ENCODE measurements at regions of chr3 and their contacts with region 1.

Region 1: DNA sequence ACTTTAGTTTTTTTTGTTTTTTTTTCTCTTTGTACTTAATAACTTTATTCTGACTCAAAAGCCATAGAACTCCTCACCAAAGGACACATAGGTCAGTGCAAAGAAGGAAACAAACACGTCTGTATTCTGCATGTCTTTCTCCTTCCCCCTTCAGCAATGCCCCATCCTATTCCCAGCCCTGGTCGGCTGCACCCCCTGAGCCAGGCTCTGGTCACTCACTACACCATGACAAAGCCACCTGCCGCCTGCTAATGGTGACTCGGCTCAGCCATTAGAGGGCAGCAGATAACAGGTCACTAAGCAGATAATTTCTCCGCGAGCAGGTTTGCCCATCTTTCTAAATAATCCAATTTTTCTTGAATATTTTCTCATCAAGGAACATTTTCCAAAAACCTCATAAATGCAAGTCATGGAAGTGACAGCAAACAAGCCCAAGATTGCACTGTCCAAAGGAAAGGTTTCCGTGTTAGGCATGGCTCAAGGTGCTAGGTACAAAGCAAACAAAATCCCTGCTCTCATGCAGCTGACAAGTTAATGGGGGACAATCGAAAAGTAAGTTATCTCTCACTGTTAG is 37.8 kb downstream of the TM4SF4 start:
- DNase-seq: peak in 1 of 2 experiments; percentile 72
- H3K4me3 ChIP-seq: peak overlapping the region in 1 of 4 experiments; percentile 34; a peak in 1 of 8 replicates
- H3K27ac ChIP-seq: no peak overlapping the region
- H3K4me1 ChIP-seq: no peaks in the 10 kb centered on the region
- H3K27me3 ChIP-seq: no peaks in the 10 kb centered on the region
- CTCF ChIP-seq: peak; percentile 81 to 92 (median 89)
- EP300 ChIP-seq: no peak
- POLR2A ChIP-seq: no peak
- RAD21 ChIP-seq: peak; percentile 92 to 93

Region 2: GRCh38 chr3:149460117-149460516 is 52.2 kb before region 1 on chr3:
- CTCF ChIA-PET with region 1: no interaction called
- POLR2A ChIA-PET with region 1: no interaction called
- DNase-seq: no peak
- H3K4me3 ChIP-seq: no peak overlapping the region
- H3K27ac ChIP-seq: no peak overlapping the region
- H3K4me1 ChIP-seq: no peaks in the 10 kb centered on the region
- H3K27me3 ChIP-seq: no peaks in the 10 kb centered on the region
- CTCF ChIP-seq: no peak
- EP300 ChIP-seq: no peak
- POLR2A ChIP-seq: no peak
- RAD21 ChIP-seq: no peak

Region 3: GRCh38 chr3:149494022-149494758 is 18.1 kb before region 1 on chr3:
- CTCF ChIA-PET with region 1: interaction called, 41 read pairs
- POLR2A ChIA-PET with region 1: no interaction called
- DNase-seq: peak; percentile 51 to 88
- H3K4me3 ChIP-seq: no peak overlapping the region
- H3K27ac ChIP-seq: no peak overlapping the region
- H3K4me1 ChIP-seq: peaks cover 0 to 3% (median under 1%) of the 10 kb centered on the region in 4 experiments; a peak in 3 of 7 replicates
- H3K27me3 ChIP-seq: no peaks in the 10 kb centered on the region
- CTCF ChIP-seq: peak; percentile 77 to 89 (median 86)
- EP300 ChIP-seq: no peak
- POLR2A ChIP-seq: no peak
- RAD21 ChIP-seq: peak; percentile 96 to 98

Region 4: DNA sequence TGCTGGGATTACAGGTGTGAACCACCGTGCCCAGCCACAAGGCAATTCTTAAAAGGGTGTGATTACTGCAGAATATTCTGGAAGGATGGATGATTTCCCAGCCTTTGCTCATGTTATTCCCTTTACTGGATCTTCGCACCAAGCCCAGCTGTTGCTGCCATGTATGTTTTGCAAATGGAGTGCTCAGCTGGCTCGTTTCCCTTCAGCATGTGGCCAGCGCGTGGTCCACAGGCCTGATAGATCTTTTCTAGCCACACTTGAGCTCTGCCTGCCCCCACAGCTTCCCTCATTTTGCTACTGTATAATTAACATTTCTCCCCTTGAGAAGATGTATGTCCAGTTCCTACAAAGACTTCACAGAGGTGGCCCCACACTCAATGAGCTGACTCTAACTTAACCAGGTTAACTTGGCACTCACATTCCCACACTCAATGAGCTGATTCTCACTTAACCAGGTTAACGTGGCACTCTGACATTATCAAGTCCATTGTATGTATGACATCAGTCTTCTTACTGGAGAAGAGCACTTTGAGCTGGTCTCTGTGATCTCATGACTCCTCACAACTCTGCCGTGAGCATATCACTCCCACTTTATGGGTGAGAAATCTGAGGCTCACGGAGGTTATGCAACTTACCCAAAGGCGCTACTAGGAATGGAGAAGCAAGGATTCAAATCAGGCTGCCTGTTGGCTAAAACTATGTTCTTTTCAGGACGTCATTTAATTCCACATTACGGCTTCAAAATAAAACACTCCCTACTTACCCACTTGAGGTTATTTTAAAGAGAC is 11.4 kb after region 1 on chr3:
- CTCF ChIA-PET with region 1: interaction called, 18 read pairs
- POLR2A ChIA-PET with region 1: no interaction called
- DNase-seq: no peak
- H3K4me3 ChIP-seq: no peak overlapping the region
- H3K27ac ChIP-seq: no peak overlapping the region
- H3K4me1 ChIP-seq: no peaks in the 10 kb centered on the region
- H3K27me3 ChIP-seq: no peaks in the 10 kb centered on the region
- CTCF ChIP-seq: no peak
- EP300 ChIP-seq: no peak
- POLR2A ChIP-seq: no peak
- RAD21 ChIP-seq: no peak

Region 5: GRCh38 chr3:149717391-149718056 is 205.2 kb after region 1 on chr3:
- CTCF ChIA-PET with region 1: interaction called, 33 read pairs
- POLR2A ChIA-PET with region 1: no interaction called
- DNase-seq: peak in 1 of 2 experiments; percentile 57
- H3K4me3 ChIP-seq: no peak overlapping the region
- H3K27ac ChIP-seq: no peak overlapping the region
- H3K4me1 ChIP-seq: no peaks in the 10 kb centered on the region; a peak in 1 of 7 replicates
- H3K27me3 ChIP-seq: no peaks in the 10 kb centered on the region
- CTCF ChIP-seq: peak in 2 of 3 experiments; percentile 59 to 74; a peak in 2 of 4 replicates
- EP300 ChIP-seq: no peak
- POLR2A ChIP-seq: no peak
- RAD21 ChIP-seq: peak; percentile 81 to 82

Region 6: DNA sequence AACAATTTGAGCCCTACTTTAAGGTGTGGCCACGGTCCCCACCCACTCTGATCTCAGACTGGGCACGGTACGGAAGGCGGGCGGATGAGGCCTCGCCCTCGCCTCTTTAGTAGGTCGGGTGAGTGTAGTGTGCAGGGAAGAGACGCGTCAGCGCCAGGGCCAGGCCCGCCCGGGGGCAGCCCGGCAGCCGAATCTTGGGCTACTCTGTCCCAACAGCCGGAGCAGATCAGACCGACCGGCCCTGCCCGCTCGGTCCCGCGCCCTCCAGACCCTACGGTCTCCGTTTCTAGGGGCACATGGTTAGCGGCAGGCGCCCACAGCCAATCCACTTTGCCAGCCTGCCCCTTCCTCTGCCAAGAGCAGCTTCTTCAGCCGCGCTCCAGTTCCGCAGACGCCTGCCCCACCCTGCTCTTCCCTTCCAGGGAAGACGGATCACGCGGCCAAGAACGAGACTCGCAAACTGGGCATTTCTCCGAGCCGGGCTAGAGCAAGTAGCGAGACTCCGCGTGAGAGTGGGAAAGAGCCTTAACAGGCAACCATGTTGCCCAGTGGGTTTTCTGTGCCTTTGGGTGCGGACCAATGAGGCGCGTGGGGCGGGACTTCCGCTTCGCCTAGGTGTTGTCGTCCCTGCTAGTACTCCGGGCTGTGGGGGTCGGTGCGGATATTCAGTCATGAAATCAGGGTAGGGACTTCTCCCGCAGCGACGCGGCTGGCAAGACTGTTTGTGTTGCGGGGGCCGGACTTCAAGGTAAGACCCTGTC is 300.5 kb after region 1 on chr3 and contains the start of gene RNF13:
- CTCF ChIA-PET with region 1: interaction called, 15 read pairs
- POLR2A ChIA-PET with region 1: no interaction called
- DNase-seq: peak; percentile 36 to 94
- H3K4me3 ChIP-seq: peak within 1 kb of the TSS; percentile 88 to 95 (median 91)
- H3K27ac ChIP-seq: peak within 1 kb of the TSS; percentile 89
- H3K4me1 ChIP-seq: peaks cover 0 to 7% (median 3%) of the 10 kb centered on the region in 4 experiments; a peak in 4 of 7 replicates
- H3K27me3 ChIP-seq: no peaks in the 10 kb centered on the region
- CTCF ChIP-seq: no peak
- EP300 ChIP-seq: no peak
- POLR2A ChIP-seq: peak; percentile 13 to 67
- RAD21 ChIP-seq: no peak
- total RNA-seq, gene RNF13: 35.4 and 37.1 TPM in 2 replicates

Measured in H1 (cell line).